IMR-90 (cell line): ENCODE measurements at regions of chr1 and their contacts with region 1.

Region 1: GRCh38 chr1:12185918-12186678 is 19.3 kb downstream of the TNFRSF1B start:
- DNase-seq: no peak
- ATAC-seq: peak; percentile 30
- H3K4me3 ChIP-seq: no peak overlapping the region
- H3K27ac ChIP-seq: peak overlapping the region; percentile 69
- H3K4me1 ChIP-seq: peaks cover 32% of the 10 kb centered on the region
- H3K27me3 ChIP-seq: no peaks in the 10 kb centered on the region
- CTCF ChIP-seq: no peak
- POLR2A ChIP-seq: no peak
- RAD21 ChIP-seq: no peak

Region 2: GRCh38 chr1:12100071-12100470 is 86.0 kb before region 1 on chr1:
- CTCF ChIA-PET with region 1: no interaction called
- POLR2A ChIA-PET with region 1: interaction called, 12 read pairs
- dilution Hi-C with region 1: no loop called
- in situ Hi-C with region 1: no loop called
- intact Hi-C with region 1: no loop called
- DNase-seq: peak; percentile 56
- ATAC-seq: peak; percentile 40; the same call in 1 of the 2 replicates
- H3K4me3 ChIP-seq: no peak overlapping the region
- H3K27ac ChIP-seq: no peak overlapping the region
- H3K4me1 ChIP-seq: peaks cover 5% of the 10 kb centered on the region
- H3K27me3 ChIP-seq: peaks cover 13% of the 10 kb centered on the region
- CTCF ChIP-seq: no peak
- POLR2A ChIP-seq: no peak
- RAD21 ChIP-seq: no peak

Region 3: DNA sequence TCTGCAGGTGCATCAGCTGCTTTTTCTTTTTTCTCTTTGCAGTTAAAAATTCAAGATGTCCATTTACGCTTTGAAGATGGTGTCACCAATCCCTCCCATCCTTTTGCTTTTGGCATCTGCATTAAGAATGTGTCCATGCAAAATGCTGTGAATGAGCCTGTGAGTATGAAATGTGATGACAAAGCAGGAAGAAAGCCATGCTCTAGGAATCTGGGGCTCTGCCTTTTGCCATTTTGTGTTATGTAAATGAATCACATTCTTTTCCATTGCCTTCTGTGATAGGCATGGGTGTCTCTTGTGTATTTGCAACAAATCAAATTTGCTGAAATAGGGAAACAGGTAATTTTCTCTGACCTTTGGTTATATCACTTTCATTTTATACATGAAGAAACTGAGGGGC is 63.1 kb after region 1 on chr1:
- CTCF ChIA-PET with region 1: no interaction called
- POLR2A ChIA-PET with region 1: no interaction called
- dilution Hi-C with region 1: no loop called
- in situ Hi-C with region 1: no loop called
- intact Hi-C with region 1: no loop called
- DNase-seq: peak; percentile 58
- ATAC-seq: peak; percentile 70
- H3K4me3 ChIP-seq: no peak overlapping the region
- H3K27ac ChIP-seq: no peak overlapping the region
- H3K4me1 ChIP-seq: 0 out of 2 replicates have a peak, but pooled peaks cover 3% of the 10 kb centered on the region
- H3K27me3 ChIP-seq: no peaks in the 10 kb centered on the region
- CTCF ChIP-seq: no peak
- POLR2A ChIP-seq: no peak
- RAD21 ChIP-seq: no peak